ENCODE measurements at regions of chr15 and their contacts with region 1.

Region 1: DNA sequence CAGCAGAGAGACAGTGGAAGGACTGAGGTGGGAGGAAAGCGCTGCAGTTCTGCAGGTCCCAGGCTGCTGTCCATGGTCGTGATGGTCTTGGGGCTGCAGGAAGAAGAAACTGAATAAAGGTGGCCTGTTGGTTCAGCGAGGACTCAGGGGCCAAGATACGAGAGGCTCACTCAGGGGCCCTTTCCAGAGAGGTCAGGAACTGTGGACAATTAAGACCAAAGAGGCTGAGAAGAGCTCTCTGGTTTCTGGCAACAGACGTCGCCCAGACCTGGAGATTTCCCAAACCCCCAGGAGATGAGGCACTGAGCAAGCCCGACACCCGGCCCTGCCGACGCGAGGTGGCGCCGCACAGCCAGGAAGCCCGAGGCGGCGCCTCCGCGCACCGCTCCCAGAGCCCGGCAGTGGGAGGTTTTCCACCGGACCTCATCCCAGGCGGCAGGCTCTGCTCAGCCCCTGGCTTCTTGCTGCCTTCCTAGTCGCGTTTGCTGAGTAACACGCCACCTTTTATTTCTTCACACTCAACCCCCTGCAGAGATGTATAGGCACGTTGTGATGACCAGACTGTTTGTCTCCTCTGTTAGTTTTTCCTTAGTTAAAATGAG is 56.4 kb upstream of the ARRDC4 start:
- H3K4me3 Mint-ChIP-seq: no peak overlapping the region
- H3K27ac Mint-ChIP-seq: no peak overlapping the region
- H3K4me1 Mint-ChIP-seq: peaks cover 9% of the 10 kb centered on the region
- H3K27me3 Mint-ChIP-seq: peaks cover 53% of the 10 kb centered on the region

Region 2: DNA sequence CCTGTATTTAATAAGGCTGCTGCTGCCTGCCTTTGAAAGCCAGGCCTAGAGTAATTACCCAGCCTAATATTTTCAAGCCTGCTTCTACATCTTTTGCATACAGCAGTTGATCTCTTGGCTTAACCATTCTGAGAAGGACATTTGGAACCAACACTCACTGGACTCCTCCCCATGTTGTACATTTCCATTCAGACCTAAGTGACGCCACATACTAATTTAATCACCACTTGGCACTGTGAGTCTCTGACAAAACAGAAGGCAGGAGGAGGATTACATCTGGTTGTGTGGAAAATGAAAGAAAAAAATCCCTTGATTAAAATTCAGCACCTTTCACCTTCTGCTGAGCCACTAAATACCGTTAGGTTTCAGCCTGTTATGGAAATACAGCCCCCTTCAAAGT is 45.8 kb before region 1 on chr15:
- intact Hi-C with region 1: no loop called
- H3K4me3 Mint-ChIP-seq: no peak overlapping the region
- H3K27ac Mint-ChIP-seq: no peak overlapping the region
- H3K4me1 Mint-ChIP-seq: no peaks in the 10 kb centered on the region
- H3K27me3 Mint-ChIP-seq: no peaks in the 10 kb centered on the region

Region 3: DNA sequence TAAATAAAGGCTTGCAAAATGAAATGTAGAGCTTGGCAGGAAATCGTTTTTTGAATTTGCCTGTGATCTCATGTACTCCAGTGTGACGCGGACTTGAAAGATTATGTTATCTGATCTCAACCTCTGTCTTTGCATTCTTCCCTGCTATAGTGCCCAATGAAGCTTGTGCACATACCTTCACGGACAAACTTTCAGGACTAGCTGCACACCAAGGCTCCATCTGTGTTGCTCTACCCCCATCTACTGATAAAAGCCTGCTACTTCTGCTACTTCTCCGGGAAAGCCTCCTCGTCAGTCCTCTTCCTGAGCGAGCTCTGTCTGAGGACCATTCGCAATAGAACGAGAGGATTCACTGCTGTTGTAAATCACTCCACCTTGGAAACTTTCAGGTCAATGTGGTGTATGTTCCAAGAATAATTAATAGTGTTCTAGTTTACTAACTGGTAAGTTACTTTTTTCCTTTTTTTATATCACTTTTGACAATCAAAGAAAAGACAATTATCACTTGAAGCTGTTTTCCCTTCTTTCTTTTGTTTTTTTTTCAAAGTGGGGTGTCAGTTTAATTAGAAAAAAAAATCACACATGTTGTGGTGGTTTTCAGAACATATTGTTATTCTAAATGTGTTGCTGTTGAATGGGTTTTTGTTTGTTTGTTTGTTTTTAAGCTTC is 274.0 kb after region 1 on chr15:
- intact Hi-C with region 1: loop called (anchors 1 kb)
- H3K4me3 Mint-ChIP-seq: no peak overlapping the region
- H3K27ac Mint-ChIP-seq: no peak overlapping the region
- H3K4me1 Mint-ChIP-seq: no peaks in the 10 kb centered on the region
- H3K27me3 Mint-ChIP-seq: peaks cover 26% of the 10 kb centered on the region

Region 4: DNA sequence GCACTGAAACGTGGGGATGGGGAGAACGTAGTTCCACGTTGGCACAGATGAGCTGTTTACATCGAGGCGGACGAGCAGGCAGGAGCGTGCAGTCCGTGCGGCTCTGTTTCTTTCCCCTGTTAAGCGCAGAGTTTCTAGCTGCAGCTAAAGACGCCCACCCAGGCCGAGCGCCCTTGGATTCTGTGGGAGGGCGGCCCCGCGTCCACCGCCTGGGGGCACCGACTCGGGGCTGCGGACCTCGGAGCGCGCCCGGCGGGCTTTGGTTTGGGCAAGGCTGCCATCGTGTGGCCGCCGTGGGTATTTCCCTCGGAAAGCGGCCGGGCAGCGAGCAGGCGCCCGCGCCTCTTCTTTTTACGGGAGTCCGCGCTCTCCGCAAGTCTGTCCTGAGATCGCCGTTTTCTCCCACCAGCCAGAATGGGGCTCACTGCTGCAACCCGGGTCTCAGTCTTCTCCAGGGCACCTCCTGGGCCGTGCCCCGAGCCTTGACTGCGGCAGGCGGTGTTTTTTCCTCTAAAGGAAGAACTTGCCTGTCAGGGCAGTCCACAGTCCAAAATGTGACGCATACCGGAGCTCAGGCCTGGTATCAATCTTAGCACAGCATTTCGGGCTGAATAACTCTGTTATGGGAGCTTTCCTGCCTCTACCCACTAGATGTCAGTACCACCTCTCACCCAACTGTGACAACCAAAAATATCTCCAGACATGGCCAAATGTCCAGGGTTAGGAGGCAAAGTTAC is 524.3 kb after region 1 on chr15:
- intact Hi-C with region 1: loop called (anchors 5 kb)
- H3K4me3 Mint-ChIP-seq: peak overlapping the region; percentile 55
- H3K27ac Mint-ChIP-seq: no peak overlapping the region
- H3K4me1 Mint-ChIP-seq: peaks cover 10% of the 10 kb centered on the region
- H3K27me3 Mint-ChIP-seq: peaks cover 50% of the 10 kb centered on the region

Measured in dendritic cell treated with granulocyte-macrophage colony-stimulating factor and Interleukin-4, amounts not matched to agents 40 ng/mL and 50 ng/mL, for 4 days (primary cell).